Left ventricle myocardium superior (tissue), 1 donor: ENCODE measurements at regions of chr1 and their contacts with region 1.

Region 1: DNA sequence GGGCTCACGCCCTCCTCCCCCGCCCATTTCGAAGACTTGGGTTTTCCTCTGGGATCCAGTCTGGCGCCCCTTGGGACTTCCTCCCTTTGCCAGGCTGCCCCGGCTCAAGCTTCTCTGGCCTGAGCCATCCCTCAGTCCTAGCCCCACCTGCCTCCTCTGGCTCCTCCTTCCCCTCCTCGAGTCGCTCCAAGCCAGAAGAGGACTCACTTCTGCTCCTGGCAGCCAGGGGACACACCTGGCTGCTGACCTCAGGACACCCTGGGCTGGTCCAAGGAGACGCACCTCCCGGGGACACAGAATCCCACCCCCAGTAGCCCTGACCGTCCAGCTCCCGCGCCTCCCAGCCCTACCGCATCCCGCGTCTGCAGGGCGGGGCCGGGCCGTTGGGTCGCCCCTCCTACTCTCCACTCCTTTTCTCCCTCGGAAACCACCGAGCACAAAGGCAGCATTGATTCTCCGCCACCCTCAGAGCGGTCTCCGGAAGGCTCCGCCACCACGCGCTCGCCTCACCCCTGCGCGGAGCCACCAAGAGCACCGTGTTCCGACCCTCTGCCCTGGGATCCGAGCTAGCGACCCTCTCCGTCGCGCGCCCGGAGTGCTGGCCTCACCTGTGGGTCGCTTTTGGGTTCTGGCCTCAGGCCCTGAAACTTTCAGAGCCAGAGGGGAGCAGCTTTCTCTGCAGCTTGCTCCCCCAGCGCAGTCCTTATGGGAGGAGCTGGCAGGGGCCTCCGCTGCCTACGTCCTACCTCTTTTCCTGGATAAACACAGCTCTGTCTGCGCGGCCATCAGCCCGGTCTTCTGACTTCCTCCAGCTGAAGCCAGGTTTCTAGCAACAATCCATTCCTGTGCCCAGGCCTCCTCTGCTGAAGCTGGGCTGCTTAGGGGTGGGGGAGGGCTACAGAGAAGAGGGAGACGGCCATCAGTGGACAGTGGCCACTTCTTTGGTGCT is at the start of gene C2CD4D:
- DNase-seq: peak; percentile 58
- ATAC-seq: peak; percentile 62
- total RNA-seq, gene C2CD4D: not detected

Region 2: GRCh38 chr1:151594143-151594625 is 245.5 kb before region 1 on chr1:
- intact Hi-C with region 1: loop called (anchors 10 kb)
- DNase-seq: peak; percentile 86
- ATAC-seq: peak; percentile 70

Region 3: DNA sequence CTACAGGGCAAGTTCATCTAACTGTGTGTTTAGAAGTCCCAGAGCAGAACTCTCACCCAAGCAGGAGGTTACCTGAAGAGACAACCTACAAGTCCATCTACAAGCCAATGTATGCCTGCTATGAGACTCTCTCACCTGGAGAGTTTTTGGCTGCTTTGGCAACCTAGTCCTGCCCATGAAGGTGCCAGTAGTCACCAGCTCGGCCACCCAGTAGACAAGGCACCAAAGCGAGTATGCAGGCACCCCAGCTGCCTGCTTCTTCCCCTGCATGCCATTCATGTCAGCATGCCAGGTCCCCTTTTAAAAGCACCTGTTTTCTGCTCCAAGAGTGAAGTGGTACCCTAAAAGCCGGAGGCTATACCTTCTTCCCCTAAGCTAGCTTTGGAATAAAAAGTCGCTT is 98.2 kb before region 1 on chr1:
- intact Hi-C with region 1: no loop called
- DNase-seq: no peak
- ATAC-seq: no peak

Region 4: DNA sequence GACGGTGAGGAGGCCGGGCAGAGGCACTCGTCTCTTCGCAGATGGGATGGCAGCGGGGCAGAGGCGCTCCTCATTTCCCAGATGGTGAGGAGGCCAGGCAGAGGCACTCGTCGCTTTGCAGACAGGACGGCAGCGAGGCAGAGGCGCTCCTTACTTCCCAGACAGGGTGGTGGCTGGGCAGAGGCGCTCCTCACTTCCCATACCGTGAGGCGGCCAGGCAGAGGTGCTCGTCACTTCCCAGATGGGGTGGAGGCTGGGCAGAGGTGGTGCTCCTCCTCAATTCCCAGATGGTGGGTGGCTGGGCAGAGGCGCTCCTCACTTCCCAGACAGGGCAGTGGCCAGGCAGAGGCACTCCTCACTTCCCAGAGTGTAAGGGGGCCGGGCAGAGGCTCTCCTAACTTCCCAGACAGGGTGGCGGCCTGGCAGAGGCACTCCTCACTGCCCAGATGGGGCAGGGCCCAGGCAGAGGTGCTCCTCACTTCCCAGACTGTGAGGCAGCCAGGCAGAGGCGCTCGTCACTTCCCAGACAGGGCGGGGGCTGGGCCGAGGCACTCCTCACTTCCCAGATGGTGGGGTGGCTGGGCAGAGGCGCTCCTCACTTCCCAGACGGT is 239.2 kb after region 1 on chr1:
- intact Hi-C with region 1: no loop called
- DNase-seq: no peak
- ATAC-seq: no peak